ENCODE measurements at regions of chr2 and their contacts with region 1.

Region 1: DNA sequence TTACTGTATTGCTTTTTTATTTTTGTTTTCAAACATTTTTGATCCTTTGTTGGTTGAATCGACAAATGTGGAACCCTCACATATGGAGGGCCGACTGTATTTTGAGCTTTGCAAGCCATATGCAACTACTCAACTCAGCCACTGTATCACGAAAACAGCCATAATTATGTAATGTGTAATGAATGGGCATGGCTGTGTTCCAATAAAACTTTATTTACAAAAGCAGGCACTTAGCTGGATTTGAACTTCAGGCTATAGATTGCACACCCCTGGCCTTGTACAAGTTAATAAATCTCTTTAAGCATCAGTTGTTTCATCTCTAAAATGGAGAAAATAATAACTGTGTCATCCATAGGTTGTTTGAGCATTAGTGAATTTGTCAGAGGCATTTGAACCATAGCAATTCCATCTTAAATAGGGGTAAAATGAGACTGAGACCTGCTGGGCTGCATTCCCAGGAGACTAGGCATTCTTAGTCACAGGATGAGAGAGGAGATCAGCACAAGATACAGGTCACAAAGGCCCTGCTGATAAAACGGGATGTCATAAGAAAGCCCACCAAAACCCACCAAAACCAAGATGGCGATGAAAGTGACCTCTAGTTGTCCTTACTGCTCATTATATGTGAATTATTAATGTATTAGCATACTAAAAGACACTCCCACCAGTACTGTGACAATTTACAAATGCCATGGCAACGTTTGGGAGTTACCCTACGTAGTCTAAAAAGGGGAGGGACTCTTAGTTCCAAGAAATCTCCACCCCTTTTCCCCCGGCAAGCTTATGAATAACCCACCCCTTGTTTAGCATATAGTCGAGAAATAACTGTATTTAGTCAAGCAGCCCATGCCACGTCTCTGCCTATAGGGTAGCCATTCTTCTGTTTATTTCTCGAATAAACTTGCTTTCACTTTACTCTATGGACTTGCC is 13.7 kb upstream of the LTBP1 start:
- DNase-seq: no peak
- ATAC-seq: no peak
- H3K4me3 ChIP-seq: no peak overlapping the region
- H3K27ac ChIP-seq: no peak overlapping the region
- H3K4me1 ChIP-seq: peaks cover 4% of the 10 kb centered on the region; the same call in 2 of the 3 replicates
- CTCF ChIP-seq: no peak
- EP300 ChIP-seq: no peak
- POLR2A ChIP-seq: no peak
- RAD21 ChIP-seq: no peak

Region 2: GRCh38 chr2:32946314-32947075 is 13.4 kb after region 1 on chr2 and contains the start of gene LTBP1:
- CTCF ChIA-PET with region 1: interaction called, 11 read pairs
- POLR2A ChIA-PET with region 1: no interaction called
- DNase-seq: peak; percentile 83 to 91
- ATAC-seq: peak; percentile 82 to 95
- H3K4me3 ChIP-seq: peak within 1 kb of the TSS; percentile 96
- H3K27ac ChIP-seq: peak within 1 kb of the TSS; percentile 94 to 96
- H3K4me1 ChIP-seq: peaks cover 19% of the 10 kb centered on the region
- CTCF ChIP-seq: peak; percentile 95
- EP300 ChIP-seq: no peak
- POLR2A ChIP-seq: peak; percentile 56
- RAD21 ChIP-seq: peak; percentile 81 to 88
- polyA plus RNA-seq, gene LTBP1: 30.4 and 42.5 TPM in 2 replicates

Region 3: DNA sequence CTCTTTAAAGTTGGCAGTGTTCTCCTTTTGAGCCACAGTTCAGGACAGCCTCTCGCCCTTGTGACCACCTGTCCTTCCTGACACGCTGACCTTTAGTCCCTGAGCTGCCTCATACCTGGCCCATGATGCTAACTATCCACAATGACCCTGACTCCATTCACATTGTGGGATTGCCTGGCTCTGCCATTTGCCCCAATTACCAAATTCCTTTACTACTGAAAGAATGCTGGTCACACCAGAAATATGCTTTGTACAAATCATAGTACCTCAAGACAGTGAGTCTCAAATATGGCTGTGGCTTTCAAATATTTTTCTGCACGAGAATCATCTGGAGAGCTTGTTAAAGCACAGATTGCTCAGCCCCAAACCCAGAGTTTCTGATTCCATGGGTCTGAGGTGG is 67.9 kb after region 1 on chr2:
- CTCF ChIA-PET with region 1: no interaction called
- POLR2A ChIA-PET with region 1: no interaction called
- DNase-seq: no peak
- ATAC-seq: no peak
- H3K4me3 ChIP-seq: no peak overlapping the region
- H3K27ac ChIP-seq: no peak overlapping the region
- H3K4me1 ChIP-seq: peaks cover 10% of the 10 kb centered on the region
- CTCF ChIP-seq: no peak
- EP300 ChIP-seq: no peak
- POLR2A ChIP-seq: no peak
- RAD21 ChIP-seq: no peak

Region 4: GRCh38 chr2:33278245-33278943 is 345.3 kb after region 1 on chr2:
- CTCF ChIA-PET with region 1: no interaction called
- POLR2A ChIA-PET with region 1: no interaction called
- DNase-seq: no peak
- ATAC-seq: no peak
- H3K4me3 ChIP-seq: no peak overlapping the region
- H3K27ac ChIP-seq: no peak overlapping the region; a peak in 1 of 6 replicates
- H3K4me1 ChIP-seq: peaks cover 35% of the 10 kb centered on the region
- CTCF ChIP-seq: no peak
- EP300 ChIP-seq: no peak
- POLR2A ChIP-seq: no peak
- RAD21 ChIP-seq: no peak

Measured in A549 (cell line).